Activated T-helper 2 cell treated with anti-CD3 and anti-CD28 coated beads, Interferon-gamma antibody, Interleukin-2, Interleukin-4, amounts not matched to agents 10 μg/mL and 5 μg/mL and 100 μg/mL, durations not matched to agents 14 hours and 24 hours and 36 hours (primary cell): ENCODE measurements at regions of chr14 and their contacts with region 1.

Region 1: GRCh38 chr14:33950320-33951182 is at the start of gene EGLN3:
- DNase-seq: peak; percentile 68
- H3K4me3 Mint-ChIP-seq: peak within 1 kb of the TSS; percentile 79
- H3K27ac Mint-ChIP-seq: no peak within 1 kb of the TSS
- H3K4me1 Mint-ChIP-seq: peaks cover 41% of the 10 kb centered on the region
- H3K27me3 Mint-ChIP-seq: peaks cover 50% of the 10 kb centered on the region
- total RNA-seq, gene EGLN3: 16.0 and 17.0 TPM in 2 replicates

Region 2: GRCh38 chr14:34018564-34019244 is 68.2 kb after region 1 on chr14:
- intact Hi-C with region 1: loop called (anchors 2 kb)
- DNase-seq: peak; percentile 9
- H3K4me3 Mint-ChIP-seq: peak overlapping the region; percentile 82
- H3K27ac Mint-ChIP-seq: peak overlapping the region; percentile 93
- H3K4me1 Mint-ChIP-seq: peaks cover 34% of the 10 kb centered on the region
- H3K27me3 Mint-ChIP-seq: no peaks in the 10 kb centered on the region

Region 3: GRCh38 chr14:34059855-34060638 is 109.5 kb after region 1 on chr14:
- intact Hi-C with region 1: loop called (anchors 5 kb)
- DNase-seq: peak; percentile 59
- H3K4me3 Mint-ChIP-seq: peak overlapping the region; percentile 83
- H3K27ac Mint-ChIP-seq: peak overlapping the region; percentile 86
- H3K4me1 Mint-ChIP-seq: peaks cover 40% of the 10 kb centered on the region
- H3K27me3 Mint-ChIP-seq: peaks cover 20% of the 10 kb centered on the region

Region 4: DNA sequence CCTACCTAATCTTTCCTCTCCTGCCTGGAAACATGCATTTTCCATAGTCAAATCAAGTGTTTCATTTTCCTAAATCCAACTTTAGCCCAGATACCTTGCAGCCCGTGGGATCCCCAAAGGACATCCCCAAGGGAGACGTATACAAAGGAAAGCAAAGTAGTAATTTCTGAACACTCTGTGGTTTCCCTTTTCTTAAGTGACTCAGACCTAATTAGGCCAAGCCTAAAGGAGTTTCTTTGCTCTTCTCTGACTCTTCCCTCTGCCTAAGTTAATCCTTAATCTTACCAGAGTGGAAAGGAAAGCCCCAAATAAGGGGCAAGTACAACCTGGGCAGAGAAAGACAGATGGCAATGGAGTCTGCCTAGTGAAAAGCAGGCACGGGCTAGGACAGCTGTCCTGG is 261.2 kb after region 1 on chr14:
- intact Hi-C with region 1: loop called (anchors 5 kb)
- DNase-seq: no peak
- H3K4me3 Mint-ChIP-seq: no peak overlapping the region
- H3K27ac Mint-ChIP-seq: peak overlapping the region; percentile 62
- H3K4me1 Mint-ChIP-seq: peaks cover 32% of the 10 kb centered on the region
- H3K27me3 Mint-ChIP-seq: peaks cover 34% of the 10 kb centered on the region